K562 (cell line): ENCODE measurements at regions of chr2 and their contacts with region 1.

Region 1: DNA sequence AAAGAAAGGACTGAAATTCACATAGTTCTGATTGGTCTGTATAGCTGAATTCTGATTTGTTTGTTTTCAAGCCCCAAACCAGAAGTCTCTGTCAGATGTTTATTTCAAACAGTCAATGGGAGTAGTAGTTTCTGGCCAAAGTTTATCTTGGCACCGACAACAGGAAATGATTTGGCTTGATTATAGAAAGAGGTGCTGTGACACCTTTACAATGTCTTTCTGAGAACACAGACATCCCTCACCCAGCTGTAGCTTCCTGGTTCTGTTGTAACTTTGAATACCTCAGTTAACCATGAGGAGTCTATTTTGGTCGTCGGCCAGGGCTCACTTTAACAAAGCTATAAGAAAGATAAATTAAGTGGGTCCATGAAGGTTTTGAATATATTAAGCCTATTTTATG is 545.0 kb upstream of the ZNF804A start:
- DNase-seq: no peak
- ATAC-seq: no peak
- H3K4me3 ChIP-seq: no peak overlapping the region
- H3K27ac ChIP-seq: no peak overlapping the region
- H3K4me1 ChIP-seq: no peaks in the 10 kb centered on the region
- H3K27me3 ChIP-seq: no peaks in the 10 kb centered on the region
- CTCF ChIP-seq: no peak
- EP300 ChIP-seq: no peak
- POLR2A ChIP-seq: no peak
- RAD21 ChIP-seq: no peak

Region 2: DNA sequence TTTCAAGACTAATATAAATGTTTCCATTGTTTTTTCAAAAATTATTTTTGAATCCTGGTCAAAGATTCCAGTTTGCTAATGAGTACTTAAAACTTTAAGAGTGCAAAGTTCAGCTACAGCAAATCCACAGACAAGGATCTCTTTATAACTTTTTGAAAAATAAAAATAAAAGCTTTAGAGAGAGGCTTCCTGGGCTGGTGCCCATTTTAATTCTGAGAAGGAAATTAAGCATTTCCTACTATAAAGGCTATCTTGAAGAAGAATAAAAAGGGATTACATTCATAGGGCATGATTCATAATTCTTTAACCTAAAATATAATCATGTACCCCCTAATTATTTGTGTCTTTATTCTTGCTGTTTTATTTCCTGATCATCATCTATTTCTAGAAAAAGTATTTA is 1299.1 kb before region 1 on chr2:
- CTCF ChIA-PET with region 1: no interaction called
- POLR2A ChIA-PET with region 1: no interaction called
- in situ Hi-C with region 1: no loop called
- intact Hi-C with region 1: no loop called
- DNase-seq: no peak
- ATAC-seq: no peak
- H3K4me3 ChIP-seq: no peak overlapping the region
- H3K27ac ChIP-seq: no peak overlapping the region
- H3K4me1 ChIP-seq: no peaks in the 10 kb centered on the region
- H3K27me3 ChIP-seq: no peaks in the 10 kb centered on the region
- CTCF ChIP-seq: no peak
- EP300 ChIP-seq: no peak
- POLR2A ChIP-seq: no peak
- RAD21 ChIP-seq: no peak

Region 3: DNA sequence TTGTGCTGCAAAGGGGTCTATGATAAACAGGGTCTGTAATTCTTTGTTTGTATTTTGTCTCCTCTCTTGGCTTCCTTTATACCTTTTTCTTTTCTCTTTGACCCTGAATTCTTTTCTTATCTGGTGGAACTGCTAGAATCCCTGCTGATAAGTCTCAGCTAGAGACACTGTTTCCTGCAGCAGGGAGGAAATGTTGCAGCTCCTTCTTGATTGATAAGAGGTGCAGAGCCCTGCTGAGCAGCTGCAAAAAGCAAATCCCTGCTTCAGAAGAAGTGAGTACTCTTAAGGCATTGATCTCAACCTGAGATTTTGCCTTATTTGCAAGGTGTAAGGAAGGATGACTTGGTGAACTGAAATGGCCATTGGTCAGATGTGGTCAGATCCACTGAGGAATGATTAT is 761.3 kb before region 1 on chr2:
- CTCF ChIA-PET with region 1: no interaction called
- POLR2A ChIA-PET with region 1: no interaction called
- in situ Hi-C with region 1: no loop called
- intact Hi-C with region 1: loop called (anchors 10 kb)
- DNase-seq: no peak
- ATAC-seq: no peak
- H3K4me3 ChIP-seq: no peak overlapping the region
- H3K27ac ChIP-seq: no peak overlapping the region
- H3K4me1 ChIP-seq: no peaks in the 10 kb centered on the region
- H3K27me3 ChIP-seq: no peaks in the 10 kb centered on the region
- CTCF ChIP-seq: no peak
- EP300 ChIP-seq: no peak
- POLR2A ChIP-seq: no peak
- RAD21 ChIP-seq: no peak

Region 4: DNA sequence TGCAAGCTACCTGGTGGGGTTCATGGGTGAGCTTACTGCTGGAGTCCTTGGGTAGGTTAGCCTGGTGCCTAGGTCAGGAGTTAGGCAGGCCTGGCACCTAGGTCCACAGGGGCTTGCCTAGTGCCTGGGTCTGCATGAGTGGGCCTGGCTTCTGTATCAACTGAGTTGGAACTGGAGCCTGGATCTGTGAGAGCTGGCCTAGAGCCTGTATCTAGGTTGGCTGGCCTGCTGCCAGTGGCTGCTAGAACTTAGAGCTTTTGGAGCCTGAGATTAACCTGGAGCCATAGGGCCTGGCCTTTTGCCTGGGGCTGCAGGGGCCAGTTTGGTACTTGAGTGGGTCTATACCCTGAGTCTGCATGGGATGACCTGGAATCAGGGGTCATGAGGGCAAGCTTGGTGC is 249.7 kb before region 1 on chr2:
- CTCF ChIA-PET with region 1: no interaction called
- POLR2A ChIA-PET with region 1: no interaction called
- in situ Hi-C with region 1: no loop called
- intact Hi-C with region 1: no loop called
- DNase-seq: no peak
- ATAC-seq: no peak
- H3K4me3 ChIP-seq: no peak overlapping the region
- H3K27ac ChIP-seq: no peak overlapping the region
- H3K4me1 ChIP-seq: no peaks in the 10 kb centered on the region
- H3K27me3 ChIP-seq: no peaks in the 10 kb centered on the region
- CTCF ChIP-seq: no peak
- EP300 ChIP-seq: no peak
- POLR2A ChIP-seq: no peak
- RAD21 ChIP-seq: no peak

Region 5: DNA sequence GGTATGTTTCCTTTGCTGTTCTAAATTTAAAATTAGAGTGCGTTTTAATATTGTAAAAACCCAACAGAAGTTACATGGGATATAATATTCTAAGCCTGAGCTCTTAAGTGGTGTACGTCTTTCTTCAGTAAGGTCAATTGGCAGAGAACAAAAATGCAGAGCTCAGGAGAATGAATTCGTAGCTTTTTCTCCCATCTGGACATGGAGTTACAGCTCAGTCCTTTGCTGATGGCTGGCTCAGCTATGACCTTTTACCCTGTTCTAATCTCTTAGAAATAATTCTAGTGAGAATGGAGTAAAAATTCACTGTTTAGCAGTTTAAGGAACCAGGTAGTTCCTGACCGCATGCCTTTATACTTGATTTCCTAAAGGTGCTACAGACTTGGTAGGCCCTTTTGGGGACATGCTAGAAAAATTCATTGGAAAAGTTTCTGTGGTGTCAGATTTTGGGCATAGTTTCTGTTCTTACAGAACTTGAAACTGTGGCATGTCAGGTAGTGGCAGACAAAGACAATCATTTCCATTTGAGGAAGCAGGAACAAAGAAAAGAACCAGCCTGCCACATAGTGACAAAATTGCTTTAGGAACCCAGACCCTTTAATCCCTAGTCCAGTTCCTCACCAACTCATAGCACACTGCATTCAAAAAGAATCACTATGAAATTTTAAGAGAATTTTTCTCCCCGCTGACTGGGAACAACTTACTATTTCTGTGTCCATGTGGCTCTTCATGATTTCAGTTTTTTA is 21.8 kb before region 1 on chr2:
- CTCF ChIA-PET with region 1: no interaction called
- POLR2A ChIA-PET with region 1: no interaction called
- in situ Hi-C with region 1: no loop called
- intact Hi-C with region 1: no loop called
- DNase-seq: no peak
- ATAC-seq: no peak
- H3K4me3 ChIP-seq: no peak overlapping the region
- H3K27ac ChIP-seq: no peak overlapping the region
- H3K4me1 ChIP-seq: no peaks in the 10 kb centered on the region
- H3K27me3 ChIP-seq: no peaks in the 10 kb centered on the region
- CTCF ChIP-seq: no peak
- EP300 ChIP-seq: no peak
- POLR2A ChIP-seq: no peak
- RAD21 ChIP-seq: no peak